Right ventricle myocardium superior (tissue), 1 donor: ENCODE measurements at regions of chr3 and their contacts with region 1.

Region 1: DNA sequence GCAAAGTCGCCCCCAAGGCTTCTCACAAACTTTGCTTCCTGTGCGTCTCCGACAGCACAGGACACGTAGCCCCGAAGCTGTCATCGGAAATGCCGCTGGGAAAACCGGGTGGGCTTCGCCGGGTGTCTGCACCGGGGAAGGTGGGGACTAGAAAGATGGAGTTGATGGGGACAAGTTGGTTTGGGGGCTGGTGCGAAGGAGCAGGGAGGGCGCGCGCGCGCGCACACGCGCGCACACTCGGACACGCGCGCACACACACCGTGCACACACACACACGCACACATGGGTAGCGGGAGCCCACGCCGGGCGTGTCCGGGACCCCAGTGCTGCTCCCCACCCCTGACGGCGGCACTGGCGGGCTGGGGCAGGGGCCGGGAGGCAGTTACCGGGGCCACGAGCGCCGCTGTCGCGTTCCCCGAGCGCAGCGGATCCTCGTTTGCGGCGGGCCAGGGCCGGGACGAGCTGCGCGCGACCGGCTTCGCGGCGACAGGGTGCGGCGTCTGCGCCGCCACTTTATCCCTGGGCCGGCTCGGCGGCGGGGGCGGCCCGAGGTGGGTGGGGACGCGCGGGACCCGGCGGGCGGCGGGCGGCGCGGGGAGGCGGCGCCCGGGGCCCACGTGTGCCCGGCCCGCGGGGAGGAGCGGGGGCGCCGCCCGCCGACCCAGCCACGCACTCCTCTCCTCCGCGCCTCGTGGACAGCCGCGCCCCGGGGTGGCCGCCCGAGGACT is 547 bp upstream of the MGLL start:
- DNase-seq: peak; percentile 81
- ATAC-seq: peak; percentile 85

Region 2: DNA sequence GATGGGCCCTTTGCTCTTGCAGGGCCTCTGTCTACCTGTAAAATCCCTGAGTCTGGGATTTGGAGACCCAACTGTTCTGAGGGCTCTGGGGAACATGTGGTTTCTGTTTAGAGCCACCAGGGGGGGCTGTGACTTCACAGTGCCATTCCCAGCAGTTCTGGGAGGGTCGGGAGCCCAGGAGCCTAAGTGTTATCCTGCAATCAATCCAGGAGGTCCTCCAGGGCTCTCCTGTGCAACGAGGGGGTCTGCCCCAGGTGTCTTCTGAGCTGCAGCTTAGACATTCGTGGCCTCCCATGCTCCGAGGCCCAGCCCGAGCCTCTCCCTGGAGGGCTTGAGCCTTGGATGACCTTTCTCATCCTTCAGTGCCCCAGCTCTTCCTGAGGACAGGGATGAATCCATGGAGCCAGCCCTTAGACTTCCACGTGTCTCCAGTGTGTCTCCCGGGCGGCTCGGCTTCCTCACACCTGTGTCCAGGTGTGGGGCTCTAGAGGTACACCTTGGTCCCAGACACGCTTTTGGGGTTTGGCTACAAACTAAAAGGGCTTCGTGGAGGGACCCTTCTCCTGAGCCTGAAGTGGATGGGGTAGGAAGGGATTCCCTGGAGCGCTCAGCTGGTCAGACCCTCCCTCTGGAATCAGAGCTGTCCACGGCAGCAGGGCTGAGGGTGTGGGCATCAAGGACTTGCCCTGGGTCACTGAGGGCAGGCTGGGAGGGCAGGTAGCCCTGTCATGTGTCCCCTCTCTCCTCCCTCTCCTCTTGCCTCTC is 170.4 kb before region 1 on chr3:
- intact Hi-C with region 1: loop called (anchors 5 kb)
- DNase-seq: peak; percentile 61
- ATAC-seq: peak; percentile 93

Region 3: GRCh38 chr3:127672516-127673190 is 150.2 kb before region 1 on chr3 and contains the start of gene ABTB1:
- intact Hi-C with region 1: loop called (anchors 5 kb)
- DNase-seq: peak; percentile 94
- ATAC-seq: peak; percentile 95
- total RNA-seq, gene ABTB1: 33.0 TPM

Region 4: GRCh38 chr3:127697551-127698240 is 125.2 kb before region 1 on chr3:
- intact Hi-C with region 1: loop called (anchors 5 kb)
- DNase-seq: peak; percentile 93
- ATAC-seq: peak; percentile 77

Region 5: DNA sequence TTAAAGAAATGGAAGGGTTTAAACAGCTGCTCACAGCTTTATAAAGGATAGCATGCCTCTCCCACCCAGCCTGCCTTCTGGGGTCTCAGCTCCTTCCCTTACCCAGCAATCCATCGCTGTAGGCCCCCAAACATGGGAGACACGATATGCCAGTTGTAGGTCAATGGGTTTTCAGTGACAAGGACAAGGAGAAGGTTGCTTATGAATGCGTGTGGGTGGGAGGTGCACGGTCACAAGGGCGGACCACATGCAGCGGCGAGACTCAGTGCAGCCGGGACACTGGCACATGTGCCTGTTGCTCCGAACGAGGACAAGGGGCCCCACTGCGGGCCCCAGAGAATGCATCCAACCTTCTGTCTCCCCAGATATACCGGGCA is 67.6 kb before region 1 on chr3:
- intact Hi-C with region 1: no loop called
- DNase-seq: no peak
- ATAC-seq: no peak